Caco-2 (cell line): ENCODE measurements at regions of chr11 and their contacts with region 1.

Region 1: GRCh38 chr11:62671575-62672389 is at the starts of genes LBHD1 and UQCC3:
- DNase-seq: peak; percentile 87 to 91
- H3K4me3 ChIP-seq: peak within 1 kb of the TSS; percentile 90
- H3K4me3 Mint-ChIP-seq: peak within 1 kb of the TSS; percentile 98
- H3K27ac Mint-ChIP-seq: peak within 1 kb of the TSS; percentile 99
- H3K4me1 ChIP-seq: peaks cover 27% of the 10 kb centered on the region
- H3K4me1 Mint-ChIP-seq: peaks cover 15% of the 10 kb centered on the region
- H3K27me3 ChIP-seq: no peaks in the 10 kb centered on the region
- H3K27me3 Mint-ChIP-seq: no peaks in the 10 kb centered on the region
- CTCF ChIP-seq: no peak
- total RNA-seq, gene LBHD1: 11.9 and 13.6 TPM in 2 replicates
- total RNA-seq, gene UQCC3: 23.9 and 24.0 TPM in 2 replicates

Region 2: DNA sequence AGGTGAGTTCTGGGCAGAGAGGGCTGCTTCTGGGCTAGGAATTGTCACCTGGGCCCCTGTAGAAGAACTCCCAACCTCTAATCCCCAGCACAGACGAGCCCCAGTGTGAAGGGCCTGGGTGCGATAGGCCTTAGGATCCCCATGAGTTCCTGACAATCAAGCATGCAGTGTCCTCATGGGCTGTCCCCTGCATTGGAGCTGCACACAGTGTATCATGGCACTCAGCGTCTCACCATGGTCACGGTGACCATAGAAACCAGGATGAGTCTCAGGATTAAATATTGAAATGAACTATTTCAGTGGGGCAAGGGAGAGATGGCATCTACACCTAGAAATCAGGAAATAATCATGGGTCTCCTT is 463.0 kb before region 1 on chr11:
- CTCF ChIA-PET with region 1: no interaction called
- POLR2A ChIA-PET with region 1: no interaction called
- intact Hi-C with region 1: no loop called
- DNase-seq: no peak
- H3K4me3 ChIP-seq: no peak overlapping the region
- H3K4me3 Mint-ChIP-seq: no peak overlapping the region
- H3K27ac Mint-ChIP-seq: no peak overlapping the region
- H3K4me1 ChIP-seq: no peaks in the 10 kb centered on the region
- H3K4me1 Mint-ChIP-seq: no peaks in the 10 kb centered on the region
- H3K27me3 ChIP-seq: no peaks in the 10 kb centered on the region; the same call in 1 of the 2 replicates
- H3K27me3 Mint-ChIP-seq: peaks cover 14% of the 10 kb centered on the region
- CTCF ChIP-seq: no peak

Region 3: DNA sequence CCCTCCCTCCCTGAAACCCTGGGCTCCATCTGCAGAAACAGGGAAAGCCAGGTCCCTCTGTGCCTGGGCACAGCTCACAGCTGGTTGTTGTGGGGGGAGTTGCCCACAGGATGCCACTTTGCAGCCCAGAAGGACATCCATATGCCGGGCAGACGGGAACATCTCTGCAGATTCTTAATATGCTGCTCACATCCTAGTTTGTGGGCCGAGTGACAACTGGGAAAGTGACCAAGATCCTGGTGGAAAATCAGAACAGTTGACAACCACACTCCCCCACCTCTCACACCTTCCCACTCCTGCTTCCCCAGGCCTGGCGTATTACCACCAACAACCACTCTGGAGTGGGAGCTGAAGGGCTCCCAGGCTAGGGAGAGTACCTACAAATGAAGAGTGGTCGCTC is 260.3 kb before region 1 on chr11:
- CTCF ChIA-PET with region 1: no interaction called
- POLR2A ChIA-PET with region 1: interaction called, 11 read pairs
- intact Hi-C with region 1: no loop called
- DNase-seq: no peak
- H3K4me3 ChIP-seq: no peak overlapping the region
- H3K4me3 Mint-ChIP-seq: no peak overlapping the region
- H3K27ac Mint-ChIP-seq: no peak overlapping the region
- H3K4me1 ChIP-seq: peaks cover 3% of the 10 kb centered on the region
- H3K4me1 Mint-ChIP-seq: peaks cover 5% of the 10 kb centered on the region
- H3K27me3 ChIP-seq: no peaks in the 10 kb centered on the region
- H3K27me3 Mint-ChIP-seq: no peaks in the 10 kb centered on the region
- CTCF ChIP-seq: no peak

Region 4: DNA sequence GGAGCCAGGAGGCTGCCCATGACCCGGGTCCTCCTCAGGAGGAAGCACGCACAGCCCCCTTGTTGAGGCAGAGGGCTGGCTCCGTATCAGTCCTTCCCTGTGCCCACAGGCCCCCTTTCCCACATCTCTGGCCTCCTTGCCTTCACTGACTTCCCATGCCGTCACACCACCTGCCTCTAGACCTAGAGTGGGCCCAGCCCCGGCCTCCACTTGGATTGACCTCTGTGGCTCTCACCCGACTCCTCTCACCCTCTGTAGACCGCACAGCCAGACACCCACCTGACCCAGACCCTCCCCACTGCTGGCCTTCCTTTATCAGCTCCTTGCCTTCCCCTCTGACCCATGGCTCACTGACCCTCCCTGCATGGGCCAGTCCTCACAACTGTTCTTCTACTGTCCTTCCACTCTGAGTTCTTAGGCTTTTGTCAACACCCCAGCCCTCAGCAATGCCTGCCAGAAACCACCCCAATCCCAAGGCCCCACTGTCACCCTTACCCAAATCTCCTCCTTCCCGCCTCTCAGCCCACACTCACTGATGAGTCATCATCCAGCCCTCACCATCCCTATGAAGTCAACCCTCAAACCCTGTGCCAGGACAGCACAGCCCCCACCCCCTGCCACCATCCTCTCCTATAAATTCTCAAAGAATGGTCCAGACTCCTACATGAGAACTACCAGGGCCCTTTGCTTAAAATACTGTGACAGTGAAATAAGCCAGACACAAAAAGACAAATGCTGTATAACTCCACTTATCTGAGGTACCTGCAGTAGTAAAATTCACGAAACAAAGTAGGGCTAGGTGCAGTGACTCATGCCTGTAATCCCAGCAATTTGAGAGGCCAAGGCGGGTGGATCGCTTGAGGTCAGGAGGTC is 199.5 kb before region 1 on chr11:
- CTCF ChIA-PET with region 1: no interaction called
- POLR2A ChIA-PET with region 1: no interaction called
- intact Hi-C with region 1: no loop called
- DNase-seq: peak; percentile 75 to 84
- H3K4me3 ChIP-seq: no peak overlapping the region
- H3K4me3 Mint-ChIP-seq: peak overlapping the region; percentile 27
- H3K27ac Mint-ChIP-seq: peak overlapping the region; percentile 93
- H3K4me1 ChIP-seq: peaks cover 48% of the 10 kb centered on the region
- H3K4me1 Mint-ChIP-seq: peaks cover 27% of the 10 kb centered on the region
- H3K27me3 ChIP-seq: no peaks in the 10 kb centered on the region
- H3K27me3 Mint-ChIP-seq: no peaks in the 10 kb centered on the region
- CTCF ChIP-seq: no peak

Region 5: GRCh38 chr11:62627714-62628113 is 44.1 kb before region 1 on chr11:
- CTCF ChIA-PET with region 1: no interaction called
- POLR2A ChIA-PET with region 1: no interaction called
- intact Hi-C with region 1: no loop called
- DNase-seq: no peak
- H3K4me3 ChIP-seq: no peak overlapping the region
- H3K4me3 Mint-ChIP-seq: no peak overlapping the region
- H3K27ac Mint-ChIP-seq: no peak overlapping the region
- H3K4me1 ChIP-seq: no peaks in the 10 kb centered on the region
- H3K4me1 Mint-ChIP-seq: no peaks in the 10 kb centered on the region
- H3K27me3 ChIP-seq: no peaks in the 10 kb centered on the region
- H3K27me3 Mint-ChIP-seq: no peaks in the 10 kb centered on the region
- CTCF ChIP-seq: peak in 1 of 2 experiments; percentile 21

Region 6: DNA sequence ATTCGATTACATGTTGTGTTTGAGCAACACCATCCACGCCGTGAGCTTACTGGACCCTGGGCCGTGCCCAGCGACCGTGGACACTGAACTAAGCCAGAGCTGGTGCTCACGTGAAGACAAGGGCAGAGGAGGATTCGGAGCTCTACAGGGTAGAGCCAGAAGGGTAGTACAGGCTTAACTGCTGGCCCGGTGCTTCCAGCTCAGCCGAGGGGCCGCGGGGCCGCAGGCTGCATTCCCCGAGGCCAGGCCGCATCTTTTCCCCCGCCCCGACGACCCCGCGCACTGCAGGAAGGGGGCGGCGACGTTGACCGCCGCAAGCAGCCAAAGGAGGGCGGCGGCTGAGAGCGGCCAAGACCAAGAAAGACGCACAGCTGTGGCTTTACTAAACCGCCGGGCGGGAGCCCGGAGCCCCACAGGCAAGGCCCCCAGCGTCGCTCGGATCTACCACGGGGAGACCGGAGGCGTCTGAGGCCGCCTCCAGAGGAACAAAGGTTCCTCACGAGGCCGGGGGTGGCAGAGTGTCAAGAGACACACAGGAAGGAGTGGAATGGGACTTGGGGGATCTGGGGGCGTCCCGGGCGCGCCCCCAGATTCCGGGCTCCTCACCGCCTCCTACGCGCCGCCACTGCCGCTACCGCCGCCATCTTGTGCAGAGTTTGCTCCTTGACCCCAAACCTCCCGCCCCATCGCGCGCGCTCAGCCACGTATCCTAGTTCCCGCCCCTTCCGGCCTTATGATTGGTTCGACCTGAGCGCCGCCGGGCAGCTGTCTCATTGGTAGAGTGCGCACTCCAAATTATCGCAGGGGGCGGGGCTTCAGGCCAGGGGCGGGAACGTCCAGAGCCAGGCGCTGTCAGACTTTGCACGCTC is 25.6 kb before region 1 on chr11 and contains the start of gene GANAB:
- CTCF ChIA-PET with region 1: no interaction called
- POLR2A ChIA-PET with region 1: interaction called, 14 read pairs
- intact Hi-C with region 1: no loop called
- DNase-seq: peak; percentile 99
- H3K4me3 ChIP-seq: peak within 1 kb of the TSS; percentile 66
- H3K4me3 Mint-ChIP-seq: peak within 1 kb of the TSS; percentile 91
- H3K27ac Mint-ChIP-seq: peak within 1 kb of the TSS; percentile 91
- H3K4me1 ChIP-seq: peaks cover 17% of the 10 kb centered on the region
- H3K4me1 Mint-ChIP-seq: no peaks in the 10 kb centered on the region
- H3K27me3 ChIP-seq: no peaks in the 10 kb centered on the region
- H3K27me3 Mint-ChIP-seq: no peaks in the 10 kb centered on the region
- CTCF ChIP-seq: no peak
- total RNA-seq, gene GANAB: 414 and 442 TPM in 2 replicates